CD4-positive, alpha-beta memory T cell (primary cell): ENCODE measurements at regions of chr6 and their contacts with region 1.

Region 1: DNA sequence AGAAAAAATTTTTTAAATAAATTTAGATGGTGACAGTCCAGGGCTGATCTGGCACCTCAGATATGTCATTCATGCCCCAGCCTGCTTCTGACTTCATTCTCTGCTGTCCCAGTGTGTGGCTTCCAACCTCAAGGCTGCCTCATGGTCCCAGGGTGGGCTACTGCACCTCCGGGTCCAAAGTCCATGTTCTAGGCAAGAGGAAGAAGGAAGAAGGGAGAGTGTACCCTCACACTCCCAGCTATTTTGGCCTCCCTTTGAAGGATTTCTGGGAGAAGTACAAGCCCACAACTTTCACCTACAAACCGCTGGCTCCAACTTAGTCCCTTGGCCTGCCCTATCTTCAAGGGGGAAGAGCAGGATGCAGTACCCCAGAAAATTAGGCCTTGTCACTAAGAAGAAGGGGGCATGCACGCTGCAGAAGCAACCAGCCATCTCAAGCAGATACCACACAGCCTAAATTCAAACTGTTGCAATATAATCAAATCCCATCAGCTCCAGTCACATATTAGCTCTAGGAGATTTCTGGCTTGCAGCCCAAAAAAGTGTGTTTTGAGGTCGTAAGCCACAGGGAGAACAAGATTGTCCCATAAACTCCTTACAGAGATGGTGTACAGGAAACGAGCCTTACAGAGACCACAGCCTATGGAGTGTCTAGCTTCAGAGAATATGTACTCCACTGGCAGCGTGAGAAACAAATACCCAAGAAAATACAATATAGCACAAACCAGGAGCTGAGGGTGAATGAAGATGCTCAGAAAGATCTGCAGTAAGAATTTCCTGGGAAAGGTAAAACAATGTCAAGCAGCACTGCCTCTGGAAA is 906 bp upstream of the BTN3A2 start:
- DNase-seq: peak in 3 of 5 donors; percentile 40 to 44 (median 43)
- H3K4me3 ChIP-seq: peak overlapping the region; percentile 79 to 87
- H3K4me3 Mint-ChIP-seq: peak overlapping the region in 1 of 8 donors; percentile 21
- H3K27ac ChIP-seq: peak overlapping the region; percentile 96
- H3K27ac Mint-ChIP-seq: no peak overlapping the region
- H3K4me1 ChIP-seq: peaks cover 69% of the 10 kb centered on the region
- H3K4me1 Mint-ChIP-seq: peaks cover 45 to 56% (median 52%) of the 10 kb centered on the region in 4 donors
- H3K27me3 ChIP-seq: no peaks in the 10 kb centered on the region
- H3K27me3 Mint-ChIP-seq: no peaks in the 10 kb centered on the region

Region 2: DNA sequence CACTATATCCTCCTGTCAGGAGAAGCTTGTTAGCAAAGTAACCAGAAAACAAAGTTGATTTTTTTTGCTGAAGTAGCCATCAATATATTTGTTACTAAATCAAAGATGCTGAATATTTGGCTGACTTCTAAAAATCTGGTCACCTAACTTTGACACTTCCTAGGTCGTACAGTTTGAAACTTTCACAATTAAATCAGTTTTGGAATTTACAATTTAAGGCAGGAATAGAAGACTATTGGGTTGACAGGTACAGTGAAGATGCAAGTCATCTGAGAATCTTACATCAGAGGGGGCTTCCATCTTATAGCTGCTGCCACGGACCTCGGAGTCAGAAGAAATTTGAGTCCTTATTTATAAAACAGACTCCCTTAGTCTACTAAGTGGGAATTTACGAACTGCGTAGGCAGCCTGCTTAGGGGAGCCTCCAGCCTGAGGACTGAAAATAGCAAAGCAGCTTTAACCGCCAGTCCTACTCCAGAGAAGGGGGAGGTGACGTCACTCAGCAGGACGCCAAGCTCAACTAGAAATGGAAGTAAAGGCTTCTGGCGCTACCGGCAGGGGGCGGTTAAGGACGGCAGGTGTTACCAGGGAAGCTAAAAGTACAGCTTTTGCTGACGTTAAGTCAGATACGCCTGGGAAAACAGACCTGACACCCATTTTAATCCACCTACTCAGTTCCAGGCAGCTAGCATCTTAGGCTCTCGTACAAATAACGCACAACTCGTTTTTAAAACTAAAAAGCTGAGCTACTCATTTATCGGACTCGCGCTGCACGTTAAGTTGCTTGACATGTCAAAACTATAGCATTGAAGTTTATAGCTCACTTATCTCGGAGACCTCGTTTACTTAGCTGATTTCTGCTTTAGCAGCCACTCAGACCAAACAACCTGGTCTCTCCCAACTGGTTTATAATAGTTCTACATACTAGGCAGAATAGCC is 337.9 kb before region 1 on chr6:
- CTCF ChIA-PET with region 1: no interaction called
- POLR2A ChIA-PET with region 1: no interaction called
- intact Hi-C with region 1: no loop called
- DNase-seq: peak; percentile 90 to 98 (median 94)
- H3K4me3 ChIP-seq: peak overlapping the region; percentile 67 to 74
- H3K4me3 Mint-ChIP-seq: peak overlapping the region; percentile 85 to 98 (median 92)
- H3K27ac ChIP-seq: peak overlapping the region; percentile 89
- H3K27ac Mint-ChIP-seq: peak overlapping the region; percentile 96 to 100 (median 99)
- H3K4me1 ChIP-seq: peaks cover 29% of the 10 kb centered on the region
- H3K4me1 Mint-ChIP-seq: peaks cover 22 to 60% (median 39%) of the 10 kb centered on the region in 4 donors
- H3K27me3 ChIP-seq: no peaks in the 10 kb centered on the region
- H3K27me3 Mint-ChIP-seq: peaks cover 0 to 4% of the 10 kb centered on the region in 2 donors

Region 3: DNA sequence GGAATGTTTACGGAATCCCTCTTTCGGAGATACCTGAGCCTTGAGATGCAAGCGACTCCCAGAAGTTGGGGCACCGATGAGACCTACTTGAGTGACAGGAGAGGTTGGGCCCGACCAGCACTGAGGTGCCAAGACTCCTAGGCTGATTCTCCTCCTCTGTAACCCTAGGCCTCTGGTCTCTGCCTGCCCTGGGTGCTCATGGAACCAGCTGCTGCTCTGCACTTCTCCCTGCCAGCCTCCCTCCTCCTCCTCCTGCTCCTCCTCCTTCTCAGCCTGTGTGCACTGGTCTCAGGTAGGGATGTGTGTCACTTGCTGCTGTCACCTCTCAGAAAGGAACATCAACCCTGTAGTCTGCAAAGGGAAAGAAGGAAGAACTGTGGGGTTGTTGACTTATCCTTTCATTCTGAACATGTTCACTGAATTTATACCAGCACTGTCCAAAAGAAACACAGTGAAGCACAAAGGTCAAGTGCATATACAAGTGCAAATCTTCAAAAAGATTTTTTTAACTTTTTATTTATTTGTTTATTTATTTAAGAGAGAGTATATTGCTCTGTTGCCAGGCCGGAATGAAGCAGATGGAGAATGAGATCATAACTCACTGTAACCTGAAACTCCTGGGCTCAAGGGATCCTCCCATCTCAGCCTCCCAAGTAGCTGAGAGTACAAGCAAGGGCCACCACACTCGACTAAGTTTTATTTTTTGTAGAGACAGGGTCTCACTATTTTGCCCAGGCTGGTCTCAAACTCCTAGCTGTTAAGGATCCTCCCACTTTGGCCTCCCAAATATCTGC is 19.7 kb after region 1 on chr6:
- CTCF ChIA-PET with region 1: no interaction called
- POLR2A ChIA-PET with region 1: interaction called, 5 read pairs
- intact Hi-C with region 1: loop called (anchors 1 kb)
- DNase-seq: no peak
- H3K4me3 ChIP-seq: peak overlapping the region; percentile 80 to 85
- H3K4me3 Mint-ChIP-seq: peak overlapping the region; percentile 98 to 100 (median 99)
- H3K27ac ChIP-seq: peak overlapping the region; percentile 88
- H3K27ac Mint-ChIP-seq: peak overlapping the region; percentile 70 to 100 (median 98)
- H3K4me1 ChIP-seq: peaks cover 10% of the 10 kb centered on the region
- H3K4me1 Mint-ChIP-seq: peaks cover 18 to 36% (median 31%) of the 10 kb centered on the region in 4 donors
- H3K27me3 ChIP-seq: no peaks in the 10 kb centered on the region
- H3K27me3 Mint-ChIP-seq: no peaks in the 10 kb centered on the region

Region 4: DNA sequence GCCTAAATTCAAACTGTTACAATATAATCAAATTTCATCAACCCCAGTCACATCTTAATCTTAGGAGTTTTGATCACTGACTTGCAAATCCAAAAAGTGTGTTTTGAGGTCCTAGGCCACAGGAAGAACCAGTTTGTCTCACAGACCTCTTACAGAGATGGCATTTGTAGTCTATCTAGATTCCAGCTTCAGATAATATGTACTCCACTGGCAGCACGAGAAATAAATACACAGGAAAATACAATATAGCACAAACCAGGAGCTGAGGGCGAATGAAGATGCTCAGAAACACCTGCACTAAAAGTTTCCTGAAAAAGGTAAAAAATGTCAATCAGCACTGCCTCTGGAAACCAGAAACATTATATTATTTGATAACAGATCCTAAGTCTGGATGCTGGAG is 75.6 kb after region 1 on chr6:
- CTCF ChIA-PET with region 1: no interaction called
- POLR2A ChIA-PET with region 1: no interaction called
- intact Hi-C with region 1: loop called (anchors 2 kb)
- DNase-seq: peak in 1 of 5 donors; percentile 31
- H3K4me3 ChIP-seq: peak overlapping the region in 1 of 2 donors; percentile 95
- H3K4me3 Mint-ChIP-seq: peak overlapping the region; percentile 93 to 100 (median 98)
- H3K27ac ChIP-seq: peak overlapping the region; percentile 97
- H3K27ac Mint-ChIP-seq: peak overlapping the region; percentile 97 to 100 (median 99)
- H3K4me1 ChIP-seq: peaks cover 37% of the 10 kb centered on the region
- H3K4me1 Mint-ChIP-seq: peaks cover 23 to 55% (median 45%) of the 10 kb centered on the region in 4 donors
- H3K27me3 ChIP-seq: no peaks in the 10 kb centered on the region
- H3K27me3 Mint-ChIP-seq: no peaks in the 10 kb centered on the region

Region 5: GRCh38 chr6:26465776-26466175 is 101.7 kb after region 1 on chr6:
- CTCF ChIA-PET with region 1: no interaction called
- POLR2A ChIA-PET with region 1: no interaction called
- intact Hi-C with region 1: no loop called
- DNase-seq: no peak
- H3K4me3 ChIP-seq: no peak overlapping the region
- H3K4me3 Mint-ChIP-seq: no peak overlapping the region
- H3K27ac ChIP-seq: no peak overlapping the region
- H3K27ac Mint-ChIP-seq: peak overlapping the region in 4 of 7 donors; percentile 29 to 66 (median 46)
- H3K4me1 ChIP-seq: peaks cover 27% of the 10 kb centered on the region
- H3K4me1 Mint-ChIP-seq: peaks cover 25 to 43% (median 38%) of the 10 kb centered on the region in 4 donors
- H3K27me3 ChIP-seq: no peaks in the 10 kb centered on the region
- H3K27me3 Mint-ChIP-seq: no peaks in the 10 kb centered on the region

Region 6: GRCh38 chr6:26553635-26554446 is 189.7 kb after region 1 on chr6:
- CTCF ChIA-PET with region 1: no interaction called
- POLR2A ChIA-PET with region 1: no interaction called
- intact Hi-C with region 1: loop called (anchors 1 kb)
- DNase-seq: peak; percentile 83 to 88 (median 86)
- H3K4me3 ChIP-seq: peak overlapping the region; percentile 67 to 93
- H3K4me3 Mint-ChIP-seq: no peak overlapping the region
- H3K27ac ChIP-seq: peak overlapping the region; percentile 31
- H3K27ac Mint-ChIP-seq: no peak overlapping the region
- H3K4me1 ChIP-seq: peaks cover 31% of the 10 kb centered on the region
- H3K4me1 Mint-ChIP-seq: peaks cover 11 to 28% (median 19%) of the 10 kb centered on the region in 4 donors
- H3K27me3 ChIP-seq: no peaks in the 10 kb centered on the region
- H3K27me3 Mint-ChIP-seq: peaks cover 0 to 2% of the 10 kb centered on the region in 2 donors